HepG2 (cell line): ENCODE measurements at regions of chr13 and their contacts with region 1.

Region 1: GRCh38 chr13:49278211-49278610 is 30.5 kb downstream of the CDADC1 start:
- DNase-seq: no peak
- ATAC-seq: no peak
- H3K4me3 ChIP-seq: no peak overlapping the region
- H3K27ac ChIP-seq: no peak overlapping the region
- H3K4me1 ChIP-seq: no peaks in the 10 kb centered on the region
- H3K27me3 ChIP-seq: no peaks in the 10 kb centered on the region
- CTCF ChIP-seq: no peak
- EP300 ChIP-seq: no peak
- POLR2A ChIP-seq: no peak
- RAD21 ChIP-seq: no peak

Region 2: DNA sequence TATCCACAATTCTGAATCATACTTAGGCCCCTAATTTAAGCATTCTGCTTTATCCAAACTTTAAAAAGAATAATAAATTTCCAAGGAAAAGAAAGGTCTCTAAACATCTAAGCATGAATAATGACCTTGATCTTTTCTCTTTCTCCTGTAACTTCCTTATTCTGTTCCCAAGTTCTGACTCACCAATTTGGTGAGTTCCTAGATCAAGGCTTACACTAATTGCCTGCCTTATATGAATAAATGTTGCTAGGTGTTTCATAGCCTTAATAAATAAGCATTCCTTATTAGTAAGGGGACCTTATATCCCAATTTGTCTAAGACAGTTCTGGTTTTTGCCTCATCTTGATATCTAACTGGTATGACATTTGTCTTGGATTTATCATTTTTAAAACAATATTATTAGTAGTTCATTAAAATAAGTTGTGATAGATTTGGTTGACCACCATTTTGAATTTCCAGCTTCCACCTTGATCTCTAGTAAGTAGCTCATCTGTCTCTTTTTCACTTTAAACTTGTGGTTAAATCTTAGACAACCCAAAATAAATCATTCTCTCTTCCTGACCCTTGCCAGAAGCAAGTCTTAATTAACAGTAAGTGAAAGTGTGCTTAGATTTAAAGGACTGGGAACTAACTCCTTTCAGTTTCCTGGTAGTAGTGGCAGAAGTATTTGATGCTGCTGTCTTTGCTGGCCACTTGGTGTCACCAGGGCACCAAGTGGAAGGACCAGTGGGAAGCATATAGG is 179.3 kb before region 1 on chr13:
- CTCF ChIA-PET with region 1: no interaction called
- POLR2A ChIA-PET with region 1: no interaction called
- in situ Hi-C with region 1: no loop called
- intact Hi-C with region 1: loop called (anchors 2 kb)
- DNase-seq: no peak
- ATAC-seq: peak; percentile 62
- H3K4me3 ChIP-seq: no peak overlapping the region
- H3K27ac ChIP-seq: no peak overlapping the region
- H3K4me1 ChIP-seq: peaks cover 22% of the 10 kb centered on the region; the same call in 1 of the 2 replicates
- H3K27me3 ChIP-seq: no peaks in the 10 kb centered on the region
- CTCF ChIP-seq: peak; percentile 56
- EP300 ChIP-seq: no peak
- POLR2A ChIP-seq: no peak
- RAD21 ChIP-seq: no peak

Region 3: GRCh38 chr13:49110122-49110912 is 167.9 kb before region 1 on chr13:
- CTCF ChIA-PET with region 1: no interaction called
- POLR2A ChIA-PET with region 1: no interaction called
- in situ Hi-C with region 1: no loop called
- intact Hi-C with region 1: no loop called
- DNase-seq: peak; percentile 92
- ATAC-seq: peak; percentile 75
- H3K4me3 ChIP-seq: peak overlapping the region; percentile 62 to 99 (median 75)
- H3K27ac ChIP-seq: peak overlapping the region; percentile 86
- H3K4me1 ChIP-seq: peaks cover 38% of the 10 kb centered on the region
- H3K27me3 ChIP-seq: no peaks in the 10 kb centered on the region; a peak in 1 of 5 replicates
- CTCF ChIP-seq: no peak
- EP300 ChIP-seq: peak in 1 of 2 experiments; percentile 21; a peak in 1 of 4 replicates
- POLR2A ChIP-seq: peak; percentile 38 to 68; a peak in 3 of 4 replicates
- RAD21 ChIP-seq: no peak

Region 4: DNA sequence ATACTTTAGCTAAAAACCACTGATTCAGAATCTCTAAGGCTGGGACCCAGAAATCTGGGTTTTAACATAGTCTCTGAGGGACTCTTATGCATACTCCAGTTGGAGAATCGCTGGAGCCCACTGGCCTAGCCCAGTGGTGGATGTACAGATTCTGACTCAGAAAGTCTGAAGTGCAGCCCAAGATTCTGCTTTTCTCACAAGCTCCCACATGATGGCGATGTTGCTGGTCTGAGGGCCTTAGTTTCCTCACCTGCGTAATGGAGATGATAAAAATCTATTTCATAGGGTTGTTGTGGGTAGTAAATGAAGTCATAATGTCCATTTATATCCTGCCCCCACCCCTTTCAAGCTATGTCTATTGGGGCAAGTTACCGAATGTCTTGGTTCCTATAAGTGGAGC is 38.2 kb before region 1 on chr13:
- CTCF ChIA-PET with region 1: interaction called, 9 read pairs
- POLR2A ChIA-PET with region 1: no interaction called
- in situ Hi-C with region 1: no loop called
- intact Hi-C with region 1: loop called (anchors 1 kb)
- DNase-seq: peak; percentile 22
- ATAC-seq: peak; percentile 85
- H3K4me3 ChIP-seq: no peak overlapping the region
- H3K27ac ChIP-seq: no peak overlapping the region
- H3K4me1 ChIP-seq: no peaks in the 10 kb centered on the region
- H3K27me3 ChIP-seq: no peaks in the 10 kb centered on the region
- CTCF ChIP-seq: peak; percentile 67
- EP300 ChIP-seq: no peak
- POLR2A ChIP-seq: no peak
- RAD21 ChIP-seq: 0 out of 2 replicates have a peak, but pooled peaks have one; percentile 19